Activated CD4-positive, alpha-beta memory T cell treated with anti-CD3 and anti-CD28 coated beads for 36 hours (primary cell): ENCODE measurements at regions of chr1 and their contacts with region 1.

Region 1: DNA sequence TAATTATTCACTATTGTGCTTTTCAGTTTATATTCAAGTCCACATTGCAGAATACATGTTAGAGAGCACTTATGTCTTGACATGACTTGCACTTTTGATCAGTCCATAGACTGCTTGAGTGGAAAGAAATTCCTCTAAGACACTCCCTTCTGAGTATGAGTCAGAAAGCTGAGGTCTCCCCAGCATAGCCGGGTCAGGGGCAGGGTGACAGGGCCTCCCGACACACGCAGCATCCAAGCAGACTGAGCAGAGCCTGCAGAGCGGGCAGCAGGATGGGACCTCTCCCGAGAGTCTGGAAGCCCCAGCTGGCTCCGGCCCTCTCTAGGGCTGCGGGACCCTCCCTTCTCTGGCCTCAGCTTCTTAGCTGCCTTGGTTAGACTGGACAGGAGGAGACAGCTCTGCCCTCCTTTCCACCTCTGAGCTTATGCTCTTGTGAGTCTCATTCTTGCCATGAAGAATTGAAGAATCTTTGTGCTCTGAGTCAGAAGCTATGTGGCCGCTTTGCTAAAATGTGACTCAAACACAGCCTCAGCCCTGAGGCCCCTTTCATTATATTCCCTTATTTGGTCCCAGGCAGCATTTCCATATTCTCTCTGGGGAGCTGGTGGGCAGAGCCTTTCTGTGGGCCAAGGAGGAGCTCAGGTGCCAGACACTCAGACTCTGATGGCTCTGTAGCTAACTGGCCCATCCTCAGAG is 11.2 kb upstream of the CAPN2 start:
- DNase-seq: peak; percentile 52
- H3K4me3 Mint-ChIP-seq: no peak overlapping the region
- H3K27ac Mint-ChIP-seq: peak overlapping the region; percentile 65
- H3K4me1 Mint-ChIP-seq: peaks cover 35% of the 10 kb centered on the region
- H3K27me3 Mint-ChIP-seq: peaks cover 4% of the 10 kb centered on the region

Region 2: DNA sequence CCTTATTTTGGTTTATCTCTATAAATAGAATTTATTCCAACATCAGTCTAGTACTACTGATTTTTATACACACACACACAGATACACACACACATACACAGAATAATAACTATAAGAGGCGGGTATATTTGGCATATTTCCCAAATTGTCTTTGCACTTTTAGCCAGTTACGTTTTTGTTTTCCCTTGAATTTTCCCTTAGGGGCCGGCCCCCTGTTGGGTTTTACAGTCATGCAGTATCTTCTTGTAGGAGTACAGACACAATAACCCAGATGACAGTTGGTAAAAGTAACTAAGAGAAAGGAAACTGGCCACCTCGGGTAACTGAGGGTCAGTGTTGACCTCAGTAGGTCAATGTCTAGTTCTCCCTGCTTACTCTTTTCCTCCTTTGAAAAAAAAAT is 835.4 kb before region 1 on chr1:
- CTCF ChIA-PET with region 1: no interaction called
- POLR2A ChIA-PET with region 1: no interaction called
- intact Hi-C with region 1: no loop called
- DNase-seq: no peak
- H3K4me3 Mint-ChIP-seq: no peak overlapping the region
- H3K27ac Mint-ChIP-seq: no peak overlapping the region
- H3K4me1 Mint-ChIP-seq: peaks cover 3% of the 10 kb centered on the region
- H3K27me3 Mint-ChIP-seq: no peaks in the 10 kb centered on the region

Region 3: DNA sequence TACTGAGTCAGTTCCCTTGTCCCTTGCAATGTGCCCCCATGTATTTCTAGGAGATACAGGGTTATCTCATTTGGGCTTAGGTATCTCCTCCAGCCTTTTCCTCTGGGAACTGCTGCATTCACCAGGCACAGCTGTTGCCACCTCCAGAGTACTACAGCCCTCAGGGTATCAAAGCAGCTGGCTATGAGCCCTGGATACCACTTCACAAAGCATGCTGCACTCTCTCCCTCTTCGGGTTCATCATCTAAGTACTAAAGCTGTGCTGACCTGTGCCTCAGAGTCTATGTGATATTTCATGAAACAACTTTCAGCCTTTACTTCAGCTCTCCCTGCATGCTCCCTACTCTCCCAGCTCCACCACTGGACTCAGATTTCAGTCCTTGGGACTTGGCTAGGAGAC is 245.6 kb before region 1 on chr1:
- CTCF ChIA-PET with region 1: no interaction called
- POLR2A ChIA-PET with region 1: no interaction called
- intact Hi-C with region 1: no loop called
- DNase-seq: no peak
- H3K4me3 Mint-ChIP-seq: no peak overlapping the region
- H3K27ac Mint-ChIP-seq: no peak overlapping the region
- H3K4me1 Mint-ChIP-seq: no peaks in the 10 kb centered on the region
- H3K27me3 Mint-ChIP-seq: no peaks in the 10 kb centered on the region

Region 4: DNA sequence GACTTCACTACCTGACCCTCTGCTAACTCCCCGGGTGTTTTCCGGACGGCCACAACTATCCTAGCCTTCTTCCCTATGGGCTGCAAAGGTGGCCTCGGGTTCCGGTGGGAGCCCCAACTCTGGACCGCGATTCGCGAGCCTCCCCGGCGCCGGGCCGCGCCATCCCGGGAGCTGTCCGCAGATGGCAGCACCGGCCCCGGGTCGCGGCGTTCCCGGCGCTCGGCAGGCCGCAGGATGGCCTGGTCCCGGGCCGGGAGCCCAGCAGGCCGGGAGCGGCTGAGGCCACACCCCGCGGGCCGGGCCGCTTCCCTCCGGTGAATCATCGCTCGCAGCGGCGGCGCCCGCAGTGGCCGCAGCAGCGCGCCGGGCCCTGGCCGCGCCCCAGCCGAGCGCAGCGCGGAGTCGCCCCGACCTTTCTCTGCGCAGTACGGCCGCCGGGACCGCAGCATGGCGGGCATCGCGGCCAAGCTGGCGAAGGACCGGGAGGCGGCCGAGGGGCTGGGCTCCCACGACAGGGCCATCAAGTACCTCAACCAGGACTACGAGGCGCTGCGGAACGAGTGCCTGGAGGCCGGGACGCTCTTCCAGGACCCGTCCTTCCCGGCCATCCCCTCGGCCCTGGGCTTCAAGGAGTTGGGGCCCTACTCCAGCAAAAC is 11.2 kb after region 1 on chr1 and contains the start of gene CAPN2:
- CTCF ChIA-PET with region 1: interaction called, 10 read pairs
- POLR2A ChIA-PET with region 1: no interaction called
- intact Hi-C with region 1: loop called (anchors 1 kb)
- DNase-seq: peak; percentile 75
- H3K4me3 Mint-ChIP-seq: peak within 1 kb of the TSS; percentile 85
- H3K27ac Mint-ChIP-seq: peak within 1 kb of the TSS; percentile 80
- H3K4me1 Mint-ChIP-seq: peaks cover 58% of the 10 kb centered on the region
- H3K27me3 Mint-ChIP-seq: no peaks in the 10 kb centered on the region
- total RNA-seq, gene CAPN2: 61.2 to 64.5 TPM

Region 5: DNA sequence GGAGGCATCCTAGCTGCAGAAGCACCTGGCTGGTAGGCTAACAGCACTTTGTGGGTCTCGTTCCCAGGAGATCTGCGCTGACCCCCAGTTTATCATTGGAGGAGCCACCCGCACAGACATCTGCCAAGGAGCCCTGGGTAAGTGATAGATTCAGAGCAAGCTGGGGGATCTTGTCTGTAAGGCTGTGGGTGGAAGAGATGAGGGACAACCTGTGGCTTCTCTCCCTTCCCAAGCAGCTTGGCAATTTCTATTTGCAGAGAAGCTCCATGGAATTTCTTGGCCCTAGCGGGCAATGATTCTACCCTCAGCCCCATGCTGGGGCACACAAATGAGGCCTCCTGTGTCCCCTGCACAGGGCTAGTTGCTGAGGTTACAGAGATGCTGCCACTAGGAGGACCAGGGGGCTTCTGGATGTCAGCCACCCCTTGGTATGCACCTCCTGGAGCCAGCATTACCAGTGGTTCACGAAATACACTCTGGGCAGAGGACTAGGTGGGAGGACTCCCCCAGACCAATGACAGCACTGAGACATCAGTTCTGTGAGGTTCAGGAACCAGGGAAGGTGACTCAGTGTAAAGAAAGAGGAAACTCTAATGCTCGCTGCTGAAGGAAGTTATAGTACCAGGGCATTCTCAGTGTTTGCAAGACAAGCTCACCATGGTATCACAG is 16.7 kb after region 1 on chr1:
- CTCF ChIA-PET with region 1: interaction called, 10 read pairs
- POLR2A ChIA-PET with region 1: interaction called, 3 read pairs
- intact Hi-C with region 1: loop called (anchors 1 kb)
- DNase-seq: peak; percentile 46
- H3K4me3 Mint-ChIP-seq: no peak overlapping the region
- H3K27ac Mint-ChIP-seq: peak overlapping the region; percentile 46
- H3K4me1 Mint-ChIP-seq: peaks cover 77% of the 10 kb centered on the region
- H3K27me3 Mint-ChIP-seq: no peaks in the 10 kb centered on the region

Region 6: DNA sequence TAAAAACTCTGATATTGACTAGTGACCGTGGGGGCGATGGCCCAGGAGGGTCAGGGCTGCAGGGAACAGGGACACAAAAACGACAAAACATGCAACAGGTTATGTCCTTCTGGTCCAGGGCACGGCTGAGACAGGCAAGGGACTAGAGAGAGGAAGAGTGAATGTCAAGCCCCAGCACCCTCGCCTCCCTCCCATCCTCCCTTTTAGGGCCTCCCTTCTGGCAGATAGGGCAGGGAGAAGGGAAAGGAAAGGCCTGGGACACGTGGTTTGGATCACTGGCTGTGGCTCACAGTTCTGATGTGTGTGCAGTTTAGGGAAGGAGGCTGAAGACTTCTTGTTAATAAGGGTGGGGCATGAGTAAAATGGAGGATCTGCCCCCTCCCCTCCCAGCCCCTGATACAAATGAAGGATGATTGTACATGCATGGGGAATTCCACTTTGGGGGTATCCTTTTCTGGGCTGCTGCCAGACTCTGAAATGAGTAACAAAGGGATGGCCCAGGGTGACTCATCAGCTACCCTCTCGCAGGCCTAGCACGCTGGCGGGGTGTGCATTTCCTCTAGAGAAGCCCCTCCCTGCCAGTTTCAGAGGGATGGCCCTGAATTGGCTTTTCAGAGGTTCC is 25.4 kb after region 1 on chr1:
- CTCF ChIA-PET with region 1: interaction called, 8 read pairs
- POLR2A ChIA-PET with region 1: interaction called, 5 read pairs
- intact Hi-C with region 1: loop called (anchors 2 kb)
- DNase-seq: peak; percentile 96
- H3K4me3 Mint-ChIP-seq: peak overlapping the region; percentile 54
- H3K27ac Mint-ChIP-seq: peak overlapping the region; percentile 71
- H3K4me1 Mint-ChIP-seq: peaks cover 74% of the 10 kb centered on the region
- H3K27me3 Mint-ChIP-seq: no peaks in the 10 kb centered on the region